ENCODE measurements at regions of chr15 and their contacts with region 1.

Region 1: DNA sequence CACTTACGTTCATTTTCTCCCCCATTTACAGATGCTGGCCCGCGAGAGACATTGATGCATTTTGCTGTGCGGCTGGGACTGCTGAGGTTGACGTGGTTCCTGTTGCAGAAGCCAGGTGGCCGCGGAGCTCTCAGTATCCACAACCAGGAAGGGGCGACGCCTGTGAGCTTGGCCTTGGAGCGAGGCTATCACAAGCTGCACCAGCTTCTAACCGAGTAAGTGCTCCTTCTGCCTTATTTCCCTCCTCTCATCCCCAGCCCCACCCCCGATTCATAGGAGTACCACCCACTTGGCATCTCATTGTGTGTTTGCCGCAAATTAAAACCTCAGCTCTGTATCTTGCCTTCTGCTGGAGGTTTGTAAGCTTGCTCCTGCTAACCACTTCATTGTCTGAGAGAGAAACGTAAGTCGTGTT is 163.3 kb downstream of the AKAP13 start:
- DNase-seq: peak; percentile 60
- ATAC-seq: peak; percentile 10
- H3K4me3 Mint-ChIP-seq: peak overlapping the region; percentile 58
- H3K27ac Mint-ChIP-seq: peak overlapping the region; percentile 64
- H3K4me1 Mint-ChIP-seq: peaks cover 83% of the 10 kb centered on the region
- H3K27me3 Mint-ChIP-seq: no peaks in the 10 kb centered on the region

Region 2: GRCh38 chr15:85504749-85505676 is 38.7 kb before region 1 on chr15:
- CTCF ChIA-PET with region 1: interaction called, 4 read pairs
- POLR2A ChIA-PET with region 1: no interaction called
- intact Hi-C with region 1: loop called in 1 of 2 experiments (anchors 5 kb)
- DNase-seq: peak; percentile 64
- ATAC-seq: no peak
- H3K4me3 Mint-ChIP-seq: no peak overlapping the region
- H3K27ac Mint-ChIP-seq: no peak overlapping the region
- H3K4me1 Mint-ChIP-seq: peaks cover 64% of the 10 kb centered on the region
- H3K27me3 Mint-ChIP-seq: no peaks in the 10 kb centered on the region

Region 3: DNA sequence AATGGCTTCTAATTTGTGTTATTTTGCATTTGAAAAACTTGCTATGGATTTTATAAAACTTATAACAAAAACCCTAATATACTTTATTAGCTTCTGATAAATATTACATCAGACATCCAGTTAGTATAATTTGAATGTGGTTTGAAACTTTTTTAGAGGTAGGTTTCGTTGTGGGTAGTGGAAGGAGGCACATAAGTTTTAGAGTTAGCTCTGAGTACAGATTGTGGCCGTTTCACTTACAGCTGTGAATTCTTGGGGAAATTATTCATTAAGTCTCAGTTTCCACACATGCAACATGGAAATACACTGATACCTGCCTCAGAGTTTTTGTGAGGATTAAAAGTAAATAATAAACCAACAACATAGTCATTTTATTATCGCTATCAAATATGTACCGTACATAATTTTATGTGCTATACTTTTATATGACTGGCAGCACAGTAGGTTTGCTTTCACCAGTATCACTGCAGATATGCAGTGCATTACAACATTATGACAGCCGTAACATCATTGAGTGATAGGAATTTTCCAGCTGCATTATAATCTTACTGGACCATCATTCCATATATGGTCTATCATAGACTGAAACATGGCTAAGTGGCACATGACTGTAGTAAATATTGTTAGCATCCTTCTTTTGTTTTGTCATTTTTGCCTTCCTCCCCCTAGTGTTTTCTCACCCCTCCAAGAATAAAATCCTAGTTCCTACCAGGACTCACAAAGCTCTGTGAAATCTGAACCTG is 12.3 kb after region 1 on chr15:
- CTCF ChIA-PET with region 1: interaction called, 5 read pairs
- POLR2A ChIA-PET with region 1: no interaction called
- intact Hi-C with region 1: loop called in 1 of 2 experiments (anchors 2 kb)
- DNase-seq: no peak
- ATAC-seq: peak; percentile 42
- H3K4me3 Mint-ChIP-seq: no peak overlapping the region
- H3K27ac Mint-ChIP-seq: peak overlapping the region; percentile 21
- H3K4me1 Mint-ChIP-seq: peaks cover 60% of the 10 kb centered on the region
- H3K27me3 Mint-ChIP-seq: no peaks in the 10 kb centered on the region

Region 4: GRCh38 chr15:85667491-85668424 is 124.0 kb after region 1 on chr15:
- CTCF ChIA-PET with region 1: no interaction called
- POLR2A ChIA-PET with region 1: no interaction called
- intact Hi-C with region 1: loop called in 1 of 2 experiments (anchors 2 kb)
- DNase-seq: peak; percentile 73
- ATAC-seq: peak; percentile 94
- H3K4me3 Mint-ChIP-seq: peak overlapping the region; percentile 47
- H3K27ac Mint-ChIP-seq: peak overlapping the region; percentile 94
- H3K4me1 Mint-ChIP-seq: peaks cover 35% of the 10 kb centered on the region
- H3K27me3 Mint-ChIP-seq: no peaks in the 10 kb centered on the region

Region 5: GRCh38 chr15:85681386-85681785 is 137.6 kb after region 1 on chr15:
- CTCF ChIA-PET with region 1: no interaction called
- POLR2A ChIA-PET with region 1: no interaction called
- intact Hi-C with region 1: no loop called
- DNase-seq: no peak
- ATAC-seq: no peak
- H3K4me3 Mint-ChIP-seq: no peak overlapping the region
- H3K27ac Mint-ChIP-seq: no peak overlapping the region
- H3K4me1 Mint-ChIP-seq: peaks cover 11% of the 10 kb centered on the region
- H3K27me3 Mint-ChIP-seq: no peaks in the 10 kb centered on the region

Region 6: DNA sequence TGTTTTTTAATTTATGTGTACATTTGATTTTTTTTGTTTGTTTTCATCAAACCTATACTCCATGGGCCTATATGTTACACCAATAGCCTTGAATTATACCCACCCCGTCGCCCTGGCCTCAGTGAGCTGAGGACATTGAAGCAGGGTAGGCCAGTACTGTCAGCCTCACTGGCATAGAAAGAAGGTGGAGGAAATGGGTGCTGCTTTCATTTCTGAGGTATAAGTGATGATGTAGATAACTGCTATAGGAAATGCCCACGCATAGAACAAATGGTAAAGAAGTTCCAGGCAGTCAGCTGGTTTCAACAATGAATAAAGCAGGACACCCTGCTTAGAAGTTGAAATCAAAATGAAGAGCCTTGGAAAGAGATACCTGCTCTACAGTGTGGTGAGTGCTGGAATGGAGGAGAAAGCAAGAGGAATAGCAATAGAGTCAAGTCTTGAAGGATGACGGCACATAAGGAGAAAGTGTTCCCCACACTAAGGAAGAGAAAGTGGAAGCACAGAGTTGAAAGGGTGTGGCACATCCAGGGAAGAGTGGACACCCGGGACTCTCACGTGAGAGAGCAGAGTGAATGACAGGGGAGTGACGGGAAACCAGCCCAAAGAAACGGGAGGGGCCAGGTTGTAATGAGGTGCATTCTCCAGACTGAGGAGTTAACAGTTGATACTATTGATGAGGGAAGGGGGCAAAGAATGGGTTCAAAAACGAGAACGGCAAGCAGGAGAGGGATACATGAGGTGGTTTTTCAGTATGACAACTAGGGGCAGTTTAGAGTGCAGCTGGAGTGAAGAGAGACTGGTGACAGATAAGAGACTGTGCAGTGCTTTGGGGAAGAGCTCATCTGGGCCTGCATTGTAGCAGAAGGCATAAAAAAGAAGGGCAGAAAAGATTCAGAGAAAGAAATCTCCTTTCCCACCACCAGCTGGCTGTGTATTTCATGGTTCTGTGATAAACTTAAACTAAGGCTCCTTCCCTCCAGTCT is 180.5 kb after region 1 on chr15:
- CTCF ChIA-PET with region 1: interaction called, 3 read pairs
- POLR2A ChIA-PET with region 1: no interaction called
- intact Hi-C with region 1: loop called in 1 of 2 experiments (anchors 5 kb)
- DNase-seq: peak; percentile 45
- ATAC-seq: peak; percentile 82
- H3K4me3 Mint-ChIP-seq: peak overlapping the region; percentile 50
- H3K27ac Mint-ChIP-seq: peak overlapping the region; percentile 98
- H3K4me1 Mint-ChIP-seq: peaks cover 68% of the 10 kb centered on the region
- H3K27me3 Mint-ChIP-seq: no peaks in the 10 kb centered on the region